Activated CD4-positive, alpha-beta memory T cell treated with anti-CD3 and anti-CD28 coated beads, Interleukin-2, amount 10 ng/mL, durations not matched to agents 7 days and 5 days (primary cell): ENCODE measurements at regions of chr3 and their contacts with region 1.

Region 1: DNA sequence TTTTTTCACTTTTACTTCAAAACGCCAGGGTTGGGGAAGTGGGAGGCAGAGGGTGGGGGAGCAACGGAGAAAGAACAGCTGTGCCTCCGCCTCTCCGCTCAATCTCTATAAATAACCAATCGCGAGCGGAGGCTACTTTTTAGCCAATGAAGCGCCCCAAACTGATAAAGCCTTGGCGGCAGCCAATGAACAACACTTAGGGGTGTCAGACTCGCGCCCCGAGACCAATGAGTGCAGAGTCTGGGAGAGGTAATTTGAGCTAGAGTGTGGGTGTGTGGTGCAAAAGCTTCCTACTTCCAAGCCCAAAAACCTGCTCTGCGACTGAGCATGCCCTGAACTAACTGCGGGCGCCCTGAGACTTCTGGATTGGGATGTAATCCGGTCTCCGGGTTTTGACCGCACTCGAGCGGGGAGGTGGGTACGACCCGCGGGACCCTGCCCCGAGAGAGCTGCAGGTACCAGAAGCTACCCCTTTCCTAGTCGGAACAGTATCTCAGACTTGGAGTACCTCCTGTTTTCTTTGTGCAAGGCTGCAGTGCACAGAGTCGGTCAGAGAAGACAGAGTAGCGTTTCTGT is 800 bp upstream of the RAP2B start:
- DNase-seq: peak; percentile 95
- H3K4me3 Mint-ChIP-seq: peak overlapping the region; percentile 99
- H3K27ac Mint-ChIP-seq: peak overlapping the region; percentile 99
- H3K4me1 Mint-ChIP-seq: peaks cover 32% of the 10 kb centered on the region
- H3K27me3 Mint-ChIP-seq: no peaks in the 10 kb centered on the region

Region 2: GRCh38 chr3:153138276-153139210 is 22.7 kb before region 1 on chr3:
- CTCF ChIA-PET with region 1: interaction called, 7 read pairs
- POLR2A ChIA-PET with region 1: interaction called, 24 read pairs
- DNase-seq: peak; percentile 70
- H3K4me3 Mint-ChIP-seq: no peak overlapping the region
- H3K27ac Mint-ChIP-seq: peak overlapping the region; percentile 63
- H3K4me1 Mint-ChIP-seq: peaks cover 38% of the 10 kb centered on the region
- H3K27me3 Mint-ChIP-seq: no peaks in the 10 kb centered on the region

Region 3: DNA sequence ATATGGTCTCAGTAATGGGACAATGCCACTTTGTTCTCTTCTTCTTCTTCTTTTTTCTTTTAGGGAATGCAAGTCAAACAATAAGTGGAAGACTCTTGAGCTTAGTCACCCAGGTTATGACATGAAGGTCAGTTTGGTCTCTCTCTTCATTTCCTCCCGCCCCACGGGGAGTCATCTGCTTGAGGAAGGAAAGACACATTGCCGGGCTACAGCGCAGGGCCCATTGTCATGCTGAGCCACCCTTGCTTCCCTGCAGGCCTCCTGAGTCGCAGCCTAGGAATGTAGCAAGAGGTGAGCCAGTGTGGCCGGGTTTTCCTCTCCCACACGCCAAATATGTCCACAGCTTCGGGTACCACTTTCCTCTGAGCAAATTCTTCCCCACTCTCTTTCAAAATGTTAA is 48.4 kb after region 1 on chr3:
- CTCF ChIA-PET with region 1: interaction called, 6 read pairs
- POLR2A ChIA-PET with region 1: interaction called, 10 read pairs
- DNase-seq: no peak
- H3K4me3 Mint-ChIP-seq: no peak overlapping the region
- H3K27ac Mint-ChIP-seq: no peak overlapping the region
- H3K4me1 Mint-ChIP-seq: peaks cover 23% of the 10 kb centered on the region
- H3K27me3 Mint-ChIP-seq: no peaks in the 10 kb centered on the region

Region 4: DNA sequence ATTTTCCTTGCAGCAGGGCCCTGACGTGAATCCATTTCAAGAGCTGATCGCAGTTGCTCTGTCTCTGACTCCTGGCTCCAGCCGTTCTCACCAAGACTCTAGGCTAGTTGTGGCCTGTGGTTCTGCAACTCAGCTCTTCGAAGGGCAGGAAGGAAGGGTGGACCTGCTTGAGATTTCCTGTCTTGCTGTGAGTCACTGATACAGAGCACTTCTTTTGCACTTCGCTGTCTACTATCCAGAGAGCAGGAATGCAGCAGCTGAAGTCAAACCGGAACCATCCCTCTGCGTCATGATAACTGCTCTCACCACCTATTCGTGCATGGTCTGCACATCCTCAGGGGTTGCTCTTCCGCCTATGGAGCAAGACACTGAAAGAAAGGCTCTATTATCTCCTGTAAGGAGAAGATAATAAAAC is 60.5 kb after region 1 on chr3:
- CTCF ChIA-PET with region 1: interaction called, 21 read pairs
- POLR2A ChIA-PET with region 1: interaction called, 134 read pairs
- DNase-seq: peak; percentile 88
- H3K4me3 Mint-ChIP-seq: peak overlapping the region; percentile 44
- H3K27ac Mint-ChIP-seq: peak overlapping the region; percentile 87
- H3K4me1 Mint-ChIP-seq: peaks cover 54% of the 10 kb centered on the region
- H3K27me3 Mint-ChIP-seq: no peaks in the 10 kb centered on the region

Region 5: DNA sequence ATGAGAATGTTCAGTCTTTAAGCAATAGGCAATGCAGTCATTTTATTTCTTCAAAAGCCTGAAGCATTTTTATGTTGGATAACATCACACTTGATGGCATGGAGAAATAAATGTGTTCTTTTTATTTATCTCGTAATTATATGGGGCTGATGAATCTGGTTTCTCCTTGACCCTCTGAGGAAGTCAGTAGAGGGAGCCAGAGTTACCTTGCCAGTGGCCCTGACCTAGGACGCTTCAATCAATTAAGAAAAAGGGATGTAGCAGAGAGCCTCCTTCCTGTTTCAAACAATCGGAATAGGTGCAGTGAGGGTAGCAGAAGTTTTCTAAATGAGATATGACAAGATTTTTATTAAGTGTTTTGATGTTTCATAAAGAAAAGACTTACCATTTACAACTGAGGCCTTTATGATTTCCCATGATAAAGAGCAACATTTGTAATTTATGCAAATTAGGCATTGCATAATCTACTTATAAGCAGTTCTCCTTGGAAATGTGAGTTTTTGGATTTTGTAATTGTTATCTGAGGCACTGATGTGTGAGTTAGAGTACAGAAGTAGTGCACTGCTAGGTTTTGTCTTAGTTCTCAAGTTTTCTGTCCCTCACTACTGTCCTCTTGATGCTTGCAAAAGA is 129.9 kb after region 1 on chr3:
- CTCF ChIA-PET with region 1: interaction called, 41 read pairs
- POLR2A ChIA-PET with region 1: interaction called, 65 read pairs
- DNase-seq: no peak
- H3K4me3 Mint-ChIP-seq: no peak overlapping the region
- H3K27ac Mint-ChIP-seq: no peak overlapping the region
- H3K4me1 Mint-ChIP-seq: peaks cover 42% of the 10 kb centered on the region
- H3K27me3 Mint-ChIP-seq: no peaks in the 10 kb centered on the region

Region 6: DNA sequence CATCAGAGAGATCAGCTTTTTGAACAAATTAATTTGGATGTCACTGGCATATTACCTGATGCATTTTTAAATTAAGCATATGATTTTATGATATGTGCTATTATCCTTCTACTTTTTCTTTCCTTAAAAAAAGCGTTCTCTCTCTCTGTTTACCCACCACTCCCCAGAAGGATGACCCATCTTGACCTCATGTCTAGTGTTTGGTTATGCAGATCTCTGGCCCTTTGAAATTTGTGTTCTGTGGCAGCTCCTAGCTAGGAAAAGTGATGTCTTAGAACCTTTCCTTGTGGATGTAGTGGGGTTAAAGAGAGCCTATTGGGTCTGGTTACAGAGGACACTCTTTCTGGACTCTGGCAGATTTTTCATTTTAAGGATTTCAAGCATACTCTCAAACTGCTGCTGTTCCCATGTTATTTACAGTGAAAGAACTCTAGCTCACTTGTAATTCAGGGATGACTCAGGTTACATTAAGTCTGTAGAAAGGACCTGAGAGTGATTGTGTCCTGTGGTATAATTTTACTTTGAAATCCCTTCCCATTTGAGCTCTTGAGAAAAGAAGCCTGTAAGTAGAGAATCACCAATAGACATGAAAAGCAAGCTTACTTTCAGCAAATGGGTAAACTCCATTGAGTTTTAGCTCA is 983.7 kb after region 1 on chr3:
- CTCF ChIA-PET with region 1: no interaction called
- POLR2A ChIA-PET with region 1: no interaction called
- DNase-seq: no peak
- H3K4me3 Mint-ChIP-seq: no peak overlapping the region
- H3K27ac Mint-ChIP-seq: no peak overlapping the region
- H3K4me1 Mint-ChIP-seq: no peaks in the 10 kb centered on the region
- H3K27me3 Mint-ChIP-seq: peaks cover 13% of the 10 kb centered on the region